CD8-positive, alpha-beta T cell (primary cell): ENCODE measurements at regions of chr3 and their contacts with region 1.

Region 1: GRCh38 chr3:158672293-158673176 is at the start of gene LXN:
- DNase-seq: peak; percentile 43 to 88 (median 77)
- ATAC-seq: peak; percentile 99
- H3K4me3 ChIP-seq: peak within 1 kb of the TSS; percentile 54 to 61
- H3K4me3 Mint-ChIP-seq: peak within 1 kb of the TSS; percentile 93
- H3K27ac ChIP-seq: peak within 1 kb of the TSS; percentile 30 to 39
- H3K27ac Mint-ChIP-seq: peak within 1 kb of the TSS; percentile 90
- H3K4me1 ChIP-seq: peaks cover 8% of the 10 kb centered on the region
- H3K4me1 Mint-ChIP-seq: peaks cover 29% of the 10 kb centered on the region
- H3K27me3 ChIP-seq: no peaks in the 10 kb centered on the region
- H3K27me3 Mint-ChIP-seq: no peaks in the 10 kb centered on the region
- CTCF ChIP-seq: peak; percentile 57
- total RNA-seq, gene LXN: 1.00 to 1.1 TPM

Region 2: GRCh38 chr3:158659454-158660237 is 12.9 kb before region 1 on chr3:
- CTCF ChIA-PET with region 1: interaction called, 4 read pairs
- POLR2A ChIA-PET with region 1: interaction called, 3 read pairs
- intact Hi-C with region 1: loop called in 1 of 2 experiments (anchors 1 kb)
- DNase-seq: peak in 6 of 9 experiments; percentile 16 to 60 (median 50)
- ATAC-seq: peak; percentile 83
- H3K4me3 ChIP-seq: no peak overlapping the region
- H3K4me3 Mint-ChIP-seq: no peak overlapping the region
- H3K27ac ChIP-seq: no peak overlapping the region
- H3K27ac Mint-ChIP-seq: no peak overlapping the region
- H3K4me1 ChIP-seq: no peaks in the 10 kb centered on the region
- H3K4me1 Mint-ChIP-seq: peaks cover 5% of the 10 kb centered on the region
- H3K27me3 ChIP-seq: no peaks in the 10 kb centered on the region
- H3K27me3 Mint-ChIP-seq: no peaks in the 10 kb centered on the region
- CTCF ChIP-seq: peak; percentile 52